ENCODE measurements at regions of chr7 and their contacts with region 1.

Region 1: GRCh38 chr7:112414855-112415490 is 35.3 kb upstream of the IFRD1 start:
- DNase-seq: peak; percentile 19
- ATAC-seq: no peak
- H3K4me3 ChIP-seq: no peak overlapping the region
- H3K4me3 Mint-ChIP-seq: no peak overlapping the region
- H3K27ac ChIP-seq: no peak overlapping the region
- H3K27ac Mint-ChIP-seq: no peak overlapping the region
- H3K4me1 ChIP-seq: no peaks in the 10 kb centered on the region
- H3K4me1 Mint-ChIP-seq: no peaks in the 10 kb centered on the region
- H3K27me3 ChIP-seq: peaks cover 0 to 2% (median under 1%) of the 10 kb centered on the region in 4 experiments
- H3K27me3 Mint-ChIP-seq: peaks cover 21% of the 10 kb centered on the region
- CTCF ChIP-seq: peak; percentile 55

Region 2: GRCh38 chr7:111499037-111499655 is 915.8 kb before region 1 on chr7:
- CTCF ChIA-PET with region 1: no interaction called
- POLR2A ChIA-PET with region 1: no interaction called
- intact Hi-C with region 1: no loop called
- DNase-seq: no peak
- ATAC-seq: no peak
- H3K4me3 ChIP-seq: no peak overlapping the region
- H3K4me3 Mint-ChIP-seq: no peak overlapping the region
- H3K27ac ChIP-seq: no peak overlapping the region
- H3K27ac Mint-ChIP-seq: no peak overlapping the region
- H3K4me1 ChIP-seq: no peaks in the 10 kb centered on the region
- H3K4me1 Mint-ChIP-seq: no peaks in the 10 kb centered on the region
- H3K27me3 ChIP-seq: no peaks in the 10 kb centered on the region
- H3K27me3 Mint-ChIP-seq: no peaks in the 10 kb centered on the region
- CTCF ChIP-seq: no peak

Region 3: GRCh38 chr7:111763221-111763801 is 651.7 kb before region 1 on chr7:
- CTCF ChIA-PET with region 1: interaction called, 3 read pairs
- POLR2A ChIA-PET with region 1: no interaction called
- intact Hi-C with region 1: loop called (anchors 5 kb)
- DNase-seq: no peak
- ATAC-seq: no peak
- H3K4me3 ChIP-seq: no peak overlapping the region
- H3K4me3 Mint-ChIP-seq: no peak overlapping the region
- H3K27ac ChIP-seq: no peak overlapping the region
- H3K27ac Mint-ChIP-seq: no peak overlapping the region
- H3K4me1 ChIP-seq: no peaks in the 10 kb centered on the region
- H3K4me1 Mint-ChIP-seq: no peaks in the 10 kb centered on the region
- H3K27me3 ChIP-seq: no peaks in the 10 kb centered on the region
- H3K27me3 Mint-ChIP-seq: no peaks in the 10 kb centered on the region
- CTCF ChIP-seq: peak; percentile 39

Region 4: GRCh38 chr7:111953611-111954010 is 461.4 kb before region 1 on chr7:
- CTCF ChIA-PET with region 1: no interaction called
- POLR2A ChIA-PET with region 1: no interaction called
- intact Hi-C with region 1: loop called (anchors 2 kb)
- DNase-seq: no peak
- ATAC-seq: no peak
- H3K4me3 ChIP-seq: no peak overlapping the region
- H3K4me3 Mint-ChIP-seq: no peak overlapping the region
- H3K27ac ChIP-seq: no peak overlapping the region
- H3K27ac Mint-ChIP-seq: no peak overlapping the region
- H3K4me1 ChIP-seq: no peaks in the 10 kb centered on the region
- H3K4me1 Mint-ChIP-seq: no peaks in the 10 kb centered on the region
- H3K27me3 ChIP-seq: no peaks in the 10 kb centered on the region
- H3K27me3 Mint-ChIP-seq: no peaks in the 10 kb centered on the region
- CTCF ChIP-seq: no peak